ENCODE measurements at regions of chr5 and their contacts with region 1.

Region 1: GRCh38 chr5:140547508-140548299 is at the start of gene EIF4EBP3:
- DNase-seq: peak; percentile 74
- ATAC-seq: peak; percentile 97
- H3K4me3 Mint-ChIP-seq: peak within 1 kb of the TSS; percentile 86
- H3K27ac Mint-ChIP-seq: peak within 1 kb of the TSS; percentile 95
- H3K4me1 Mint-ChIP-seq: peaks cover 28% of the 10 kb centered on the region
- H3K27me3 Mint-ChIP-seq: no peaks in the 10 kb centered on the region
- CTCF ChIP-seq: no peak
- total RNA-seq, gene EIF4EBP3: 14.4 and 18.2 TPM in 2 replicates

Region 2: GRCh38 chr5:140564196-140565023 is 16.7 kb after region 1 on chr5 and contains the starts of genes APBB3 and SLC35A4:
- CTCF ChIA-PET with region 1: interaction called, 3 read pairs
- POLR2A ChIA-PET with region 1: interaction called, 39 read pairs
- intact Hi-C with region 1: loop called (anchors 1 kb)
- DNase-seq: peak; percentile 89
- ATAC-seq: peak; percentile 90
- H3K4me3 Mint-ChIP-seq: peak within 1 kb of the TSS; percentile 98
- H3K27ac Mint-ChIP-seq: peak within 1 kb of the TSS; percentile 90
- H3K4me1 Mint-ChIP-seq: peaks cover 57% of the 10 kb centered on the region
- H3K27me3 Mint-ChIP-seq: no peaks in the 10 kb centered on the region
- CTCF ChIP-seq: no peak
- total RNA-seq, gene APBB3: 36.0 and 37.5 TPM in 2 replicates
- total RNA-seq, gene SLC35A4: 76.0 and 77.9 TPM in 2 replicates

Region 3: DNA sequence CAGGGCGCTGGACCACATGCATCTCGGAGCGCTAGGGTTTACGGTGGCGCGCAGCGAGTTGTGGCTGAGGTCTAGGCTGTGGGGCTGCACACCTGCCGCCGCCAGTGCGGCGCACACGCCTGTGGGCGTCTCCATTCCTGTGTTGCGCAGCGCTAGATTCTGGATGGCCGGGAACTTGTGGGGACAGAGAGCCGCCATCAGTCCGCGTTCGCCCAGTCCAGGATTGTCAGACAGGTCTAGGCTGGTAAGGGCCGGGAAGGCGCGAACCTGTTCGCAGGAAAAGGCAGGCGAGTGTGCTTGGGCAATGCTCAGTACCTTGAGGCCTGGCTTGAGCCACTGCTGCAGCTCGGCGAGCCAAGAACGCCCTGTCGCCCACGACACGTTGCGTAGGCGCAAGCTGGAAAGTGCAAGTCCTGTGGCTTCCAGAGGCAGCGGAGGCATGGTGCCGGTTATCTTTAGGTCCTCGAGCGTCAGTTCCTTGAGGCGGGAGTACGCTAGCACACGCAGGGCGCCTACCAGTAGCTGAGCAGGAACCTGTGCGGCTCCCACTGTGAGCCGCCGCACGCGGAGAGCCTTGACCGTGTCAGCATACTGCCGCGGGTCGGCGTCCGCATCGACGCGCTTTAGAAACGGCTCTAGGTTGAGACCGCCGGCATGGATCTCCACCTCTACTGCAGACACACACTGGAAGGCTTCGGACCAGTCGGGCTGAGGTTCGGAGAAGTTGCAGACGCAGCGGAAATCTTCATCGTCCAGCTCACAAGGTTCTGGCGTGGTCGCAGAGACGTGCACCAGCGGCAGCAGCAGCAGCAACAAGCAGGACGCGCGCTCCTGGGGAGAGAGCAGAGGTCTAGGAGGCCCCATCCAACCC is 84.7 kb after region 1 on chr5:
- CTCF ChIA-PET with region 1: interaction called, 4 read pairs
- POLR2A ChIA-PET with region 1: interaction called, 8 read pairs
- intact Hi-C with region 1: loop called (anchors 1 kb)
- DNase-seq: peak; percentile 43
- ATAC-seq: peak; percentile 77
- H3K4me3 Mint-ChIP-seq: peak overlapping the region; percentile 87
- H3K27ac Mint-ChIP-seq: no peak overlapping the region
- H3K4me1 Mint-ChIP-seq: peaks cover 33% of the 10 kb centered on the region
- H3K27me3 Mint-ChIP-seq: peaks cover 18% of the 10 kb centered on the region
- CTCF ChIP-seq: no peak

Region 4: DNA sequence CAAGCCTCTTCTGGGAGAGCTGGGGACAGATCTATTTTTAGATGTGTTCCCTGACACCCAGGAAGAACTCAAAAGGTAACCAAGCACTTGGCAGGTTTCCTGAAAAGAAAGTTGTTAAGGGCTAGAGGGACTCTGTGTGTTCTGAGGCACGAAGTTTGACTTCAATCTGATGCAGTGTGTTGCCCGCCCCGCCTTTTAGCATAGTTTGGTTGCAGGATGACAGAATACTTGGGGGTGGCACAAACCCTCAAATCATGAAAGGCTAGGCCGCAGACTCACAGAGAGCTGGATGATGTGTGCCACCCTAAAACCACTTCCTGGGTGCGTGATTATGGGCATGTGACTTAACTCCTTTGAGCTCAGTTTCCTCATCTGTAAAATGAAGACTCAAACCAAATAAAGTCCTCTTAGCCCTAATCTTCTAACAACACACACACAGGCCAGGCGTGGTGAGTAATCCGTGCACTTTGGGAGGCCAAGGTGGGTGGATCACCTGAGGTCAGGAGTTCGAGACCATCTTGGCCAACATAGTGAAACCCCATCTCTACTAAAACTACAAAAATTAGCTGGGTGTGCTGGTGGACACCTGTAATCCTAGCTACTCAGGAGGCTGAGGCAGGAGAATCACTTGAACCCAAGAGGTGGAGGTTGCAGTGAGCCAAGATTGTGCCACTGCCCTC is 1548.1 kb after region 1 on chr5:
- CTCF ChIA-PET with region 1: no interaction called
- POLR2A ChIA-PET with region 1: no interaction called
- intact Hi-C with region 1: no loop called
- DNase-seq: no peak
- ATAC-seq: peak; percentile 54
- H3K4me3 Mint-ChIP-seq: no peak overlapping the region
- H3K27ac Mint-ChIP-seq: no peak overlapping the region
- H3K4me1 Mint-ChIP-seq: peaks cover 11% of the 10 kb centered on the region
- H3K27me3 Mint-ChIP-seq: peaks cover 8% of the 10 kb centered on the region
- CTCF ChIP-seq: no peak

Measured in activated B cell treated with CpG ODN at 0.5 μM for 24 hours (primary cell).